Activated naive CD4-positive, alpha-beta T cell treated with anti-CD3 and anti-CD28 coated beads for 36 hours (primary cell): ENCODE measurements at regions of chr4 and their contacts with region 1.

Region 1: GRCh38 chr4:17324386-17324830 is 187.5 kb downstream of the QDPR start:
- DNase-seq: peak; percentile 71
- H3K4me3 Mint-ChIP-seq: peak overlapping the region; percentile 19
- H3K27ac Mint-ChIP-seq: no peak overlapping the region
- H3K4me1 Mint-ChIP-seq: peaks cover 17% of the 10 kb centered on the region
- H3K27me3 Mint-ChIP-seq: no peaks in the 10 kb centered on the region

Region 2: GRCh38 chr4:16289897-16290554 is 1034.4 kb before region 1 on chr4:
- CTCF ChIA-PET with region 1: no interaction called
- intact Hi-C with region 1: loop called (anchors 1 kb)
- DNase-seq: peak; percentile 7
- H3K4me3 Mint-ChIP-seq: no peak overlapping the region
- H3K27ac Mint-ChIP-seq: no peak overlapping the region
- H3K4me1 Mint-ChIP-seq: peaks cover 5% of the 10 kb centered on the region
- H3K27me3 Mint-ChIP-seq: peaks cover 16% of the 10 kb centered on the region

Region 3: GRCh38 chr4:16794816-16795445 is 529.5 kb before region 1 on chr4:
- CTCF ChIA-PET with region 1: interaction called, 7 read pairs
- intact Hi-C with region 1: loop called (anchors 1 kb)
- DNase-seq: peak; percentile 67
- H3K4me3 Mint-ChIP-seq: no peak overlapping the region
- H3K27ac Mint-ChIP-seq: no peak overlapping the region
- H3K4me1 Mint-ChIP-seq: no peaks in the 10 kb centered on the region
- H3K27me3 Mint-ChIP-seq: no peaks in the 10 kb centered on the region

Region 4: DNA sequence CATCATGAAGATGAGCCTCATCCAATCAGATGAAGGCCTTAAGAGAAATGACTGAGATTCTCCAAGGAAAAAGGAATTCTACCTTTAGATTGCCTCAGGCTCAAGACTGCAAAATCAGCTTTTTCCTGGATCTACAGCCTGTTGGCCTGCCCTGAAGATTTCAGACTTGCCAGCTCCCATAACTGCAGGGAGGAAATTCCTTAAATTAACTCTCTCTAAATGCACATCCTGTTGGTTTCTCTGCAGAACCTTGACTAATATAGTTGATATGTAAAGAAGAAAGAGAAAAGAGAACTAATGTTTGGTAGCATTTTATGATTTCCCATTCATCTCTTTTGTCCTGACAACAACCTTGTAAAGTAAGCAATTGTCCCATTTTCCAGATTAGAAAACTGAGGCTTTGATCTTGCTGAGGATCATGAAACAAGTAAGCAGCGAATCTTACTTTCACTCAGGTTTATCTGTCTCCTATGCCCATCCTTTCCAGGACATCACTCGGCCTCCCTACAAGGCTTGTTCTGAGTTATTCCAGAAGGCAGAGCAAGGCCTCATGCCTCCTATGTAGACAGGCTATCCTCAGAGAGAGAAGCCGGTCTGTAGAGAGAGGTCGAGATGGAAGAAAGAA is 310.9 kb before region 1 on chr4:
- CTCF ChIA-PET with region 1: no interaction called
- intact Hi-C with region 1: loop called (anchors 10 kb)
- DNase-seq: no peak
- H3K4me3 Mint-ChIP-seq: no peak overlapping the region
- H3K27ac Mint-ChIP-seq: no peak overlapping the region
- H3K4me1 Mint-ChIP-seq: no peaks in the 10 kb centered on the region
- H3K27me3 Mint-ChIP-seq: no peaks in the 10 kb centered on the region

Region 5: DNA sequence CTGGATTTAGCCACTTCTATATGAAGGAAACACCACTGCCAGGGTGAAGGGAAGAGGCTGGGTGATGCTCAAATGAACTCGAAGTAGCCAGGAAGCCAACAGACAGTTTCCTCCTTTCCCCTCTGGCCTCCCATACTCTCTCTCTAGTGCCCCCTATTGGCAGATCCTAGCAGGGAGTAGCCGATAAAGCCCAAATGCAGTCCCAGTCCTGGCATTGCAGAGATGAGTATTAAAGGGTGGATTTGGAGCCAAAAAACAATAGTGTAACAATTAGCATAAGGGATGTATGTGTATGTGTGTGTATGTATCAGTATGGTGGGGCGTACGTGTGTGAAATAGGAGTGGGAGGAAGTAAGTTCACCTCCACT is 212.1 kb before region 1 on chr4:
- CTCF ChIA-PET with region 1: no interaction called
- intact Hi-C with region 1: loop called (anchors 5 kb)
- DNase-seq: peak; percentile 25
- H3K4me3 Mint-ChIP-seq: no peak overlapping the region
- H3K27ac Mint-ChIP-seq: no peak overlapping the region
- H3K4me1 Mint-ChIP-seq: no peaks in the 10 kb centered on the region
- H3K27me3 Mint-ChIP-seq: peaks cover 17% of the 10 kb centered on the region